ENCODE measurements at regions of chr1 and their contacts with region 1.

Region 1: GRCh38 chr1:91774520-91775203 is 111.3 kb downstream of the TGFBR3 start:
- DNase-seq: no peak

Region 2: DNA sequence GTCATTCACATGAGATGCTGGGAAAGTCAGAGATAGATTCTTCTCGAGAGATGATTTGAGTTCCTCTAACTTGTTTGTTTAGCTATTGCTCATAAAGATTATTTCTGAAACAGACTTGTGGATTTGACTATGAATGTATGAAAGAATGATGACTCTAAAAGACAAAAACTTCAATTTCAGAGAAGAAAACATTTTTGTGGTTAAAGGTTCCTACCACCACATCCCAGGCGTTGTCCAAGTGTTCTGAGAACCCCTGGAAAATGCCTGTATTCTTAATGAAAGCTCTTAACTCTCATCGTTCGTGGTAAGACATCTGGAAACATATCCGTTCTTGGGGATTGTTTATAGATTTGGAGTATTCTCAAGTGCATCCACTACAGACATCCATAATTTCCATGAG is 1286.2 kb before region 1 on chr1:
- intact Hi-C with region 1: loop called in 1 of 2 experiments (anchors 10 kb)
- DNase-seq: no peak

Region 3: GRCh38 chr1:91761295-91761721 is 13.4 kb before region 1 on chr1:
- intact Hi-C with region 1: no loop called
- DNase-seq: no peak

Region 4: GRCh38 chr1:91819038-91819788 is 44.6 kb after region 1 on chr1:
- intact Hi-C with region 1: no loop called
- DNase-seq: no peak

Region 5: DNA sequence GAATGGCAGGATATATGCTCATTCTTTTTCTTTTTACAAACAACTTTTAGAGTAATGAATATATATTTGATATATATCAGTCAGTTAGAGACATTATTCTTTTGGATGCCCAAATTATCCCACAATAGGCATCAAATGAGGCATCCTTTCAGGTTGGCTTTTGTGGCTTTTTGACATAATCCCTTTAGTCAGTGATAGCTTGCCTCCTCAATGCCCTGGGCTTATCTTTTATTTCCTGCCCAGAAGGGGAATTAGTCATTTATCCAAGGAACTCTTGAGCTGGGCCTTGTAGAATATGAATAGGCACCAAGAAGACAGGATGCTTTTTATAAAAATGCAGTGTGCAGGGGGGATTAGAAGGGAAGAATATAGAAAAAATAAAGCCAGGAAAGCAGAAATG is 277.3 kb after region 1 on chr1:
- intact Hi-C with region 1: no loop called
- DNase-seq: no peak

Measured in posterior vena cava (tissue), 2 donors.